Aorta (tissue), 5 donors: ENCODE measurements at regions of chr15 and their contacts with region 1.

Region 1: DNA sequence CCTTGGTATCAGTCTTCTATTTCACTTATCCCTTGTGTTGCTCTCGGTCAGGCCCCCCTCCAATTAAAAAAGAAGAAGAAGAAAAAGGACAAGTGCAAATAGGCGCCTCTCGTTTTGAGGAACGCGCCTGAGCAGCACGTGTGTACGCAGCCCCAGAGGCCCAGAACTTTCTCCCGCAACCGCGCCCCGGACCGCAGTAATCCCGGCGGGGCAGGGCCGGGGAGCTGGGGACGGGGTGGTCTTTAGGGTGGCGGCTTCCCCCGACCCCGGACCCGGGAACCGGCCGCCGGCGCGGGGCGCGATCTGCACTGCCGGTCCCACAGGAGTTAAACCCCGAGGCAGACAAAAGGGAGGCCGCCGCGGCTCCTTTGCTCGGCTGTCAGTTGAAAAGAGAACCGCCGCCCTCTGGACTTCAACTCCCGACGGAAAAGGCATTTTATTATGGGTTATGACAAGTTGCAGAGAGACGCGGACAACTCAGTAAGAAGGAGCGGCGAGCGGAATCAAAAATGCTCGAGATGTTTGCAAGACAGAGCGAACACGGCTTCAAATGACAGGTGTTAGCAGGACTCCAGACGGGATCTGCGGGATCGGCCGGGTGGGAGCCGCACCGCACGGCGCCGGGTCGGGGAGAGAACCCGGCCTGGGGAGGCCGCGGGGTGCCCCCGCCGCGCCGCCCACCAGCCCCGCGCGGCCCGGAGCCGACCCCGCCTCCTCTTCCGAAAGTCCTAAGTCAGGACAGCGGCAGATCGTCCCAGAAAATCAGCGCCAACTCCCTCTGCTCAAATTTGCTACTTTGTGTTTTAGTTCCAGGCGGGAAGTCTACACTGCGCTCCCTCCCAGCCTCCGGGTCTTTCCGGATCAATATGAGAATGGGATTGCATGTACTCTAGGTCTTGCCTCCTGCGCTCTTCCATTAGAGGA is 79.0 kb downstream of the NR2F2 start:
- DNase-seq: no peak
- ATAC-seq: no peak
- H3K4me3 ChIP-seq: peak overlapping the region; percentile 5 to 22
- H3K27ac ChIP-seq: no peak overlapping the region
- H3K4me1 ChIP-seq: no peaks in the 10 kb centered on the region
- H3K27me3 ChIP-seq: peaks cover 0 to 5% of the 10 kb centered on the region in 2 donors

Region 2: GRCh38 chr15:95659656-95660055 is 749.8 kb before region 1 on chr15:
- intact Hi-C with region 1: no loop called
- DNase-seq: no peak
- ATAC-seq: no peak
- H3K4me3 ChIP-seq: no peak overlapping the region
- H3K27ac ChIP-seq: no peak overlapping the region
- H3K4me1 ChIP-seq: peaks cover 0 to 2% of the 10 kb centered on the region in 2 donors
- H3K27me3 ChIP-seq: no peaks in the 10 kb centered on the region

Region 3: DNA sequence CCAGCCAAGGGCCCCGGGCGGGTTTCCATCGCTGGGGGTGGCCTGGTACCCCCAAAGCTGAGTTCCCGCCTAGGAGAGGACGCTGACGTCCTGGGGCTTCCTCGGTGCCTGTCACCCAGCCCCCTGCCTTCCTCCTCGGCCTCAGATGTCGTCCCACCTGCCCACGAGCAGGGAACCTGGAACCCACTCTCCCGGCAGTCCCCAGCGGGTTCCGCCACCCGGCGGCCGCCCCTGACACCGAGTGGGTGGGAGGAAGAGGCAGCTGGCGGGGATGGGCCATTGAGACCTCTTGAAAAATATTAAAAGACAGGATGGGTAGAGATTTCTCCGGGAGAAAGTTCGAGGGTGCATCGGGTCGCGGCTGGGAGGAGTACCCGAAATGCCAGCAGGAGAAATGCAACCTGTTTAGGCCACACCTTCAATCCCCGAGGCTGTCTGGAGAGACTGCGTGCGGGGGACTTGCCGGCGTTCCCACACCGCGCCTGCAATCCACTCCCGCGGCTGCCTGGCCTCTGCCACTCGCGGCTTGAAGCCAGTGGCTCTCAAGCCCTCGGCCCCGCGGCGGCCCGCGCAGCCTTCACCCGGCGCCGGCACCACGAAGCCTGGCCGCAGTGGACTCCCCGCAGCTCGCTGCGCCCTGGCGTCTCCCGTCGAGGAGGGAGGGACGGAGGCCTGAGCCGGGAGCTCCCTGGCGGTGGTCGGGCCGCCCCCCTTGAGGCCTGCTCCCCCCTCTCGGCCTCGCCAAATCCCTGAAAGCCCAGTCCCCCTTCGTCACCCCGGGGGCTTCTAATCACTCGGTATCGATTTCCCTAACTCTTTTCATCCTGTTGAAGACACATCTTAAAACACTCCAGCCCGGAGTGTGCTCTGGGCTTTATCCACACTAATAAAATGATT is 87.6 kb before region 1 on chr15:
- intact Hi-C with region 1: no loop called
- DNase-seq: peak in 1 of 2 donors; percentile 86
- ATAC-seq: peak; percentile 64
- H3K4me3 ChIP-seq: peak overlapping the region; percentile 27 to 70
- H3K27ac ChIP-seq: peak overlapping the region in 1 of 2 donors; percentile 66
- H3K4me1 ChIP-seq: no peaks in the 10 kb centered on the region
- H3K27me3 ChIP-seq: no peaks in the 10 kb centered on the region

Region 4: DNA sequence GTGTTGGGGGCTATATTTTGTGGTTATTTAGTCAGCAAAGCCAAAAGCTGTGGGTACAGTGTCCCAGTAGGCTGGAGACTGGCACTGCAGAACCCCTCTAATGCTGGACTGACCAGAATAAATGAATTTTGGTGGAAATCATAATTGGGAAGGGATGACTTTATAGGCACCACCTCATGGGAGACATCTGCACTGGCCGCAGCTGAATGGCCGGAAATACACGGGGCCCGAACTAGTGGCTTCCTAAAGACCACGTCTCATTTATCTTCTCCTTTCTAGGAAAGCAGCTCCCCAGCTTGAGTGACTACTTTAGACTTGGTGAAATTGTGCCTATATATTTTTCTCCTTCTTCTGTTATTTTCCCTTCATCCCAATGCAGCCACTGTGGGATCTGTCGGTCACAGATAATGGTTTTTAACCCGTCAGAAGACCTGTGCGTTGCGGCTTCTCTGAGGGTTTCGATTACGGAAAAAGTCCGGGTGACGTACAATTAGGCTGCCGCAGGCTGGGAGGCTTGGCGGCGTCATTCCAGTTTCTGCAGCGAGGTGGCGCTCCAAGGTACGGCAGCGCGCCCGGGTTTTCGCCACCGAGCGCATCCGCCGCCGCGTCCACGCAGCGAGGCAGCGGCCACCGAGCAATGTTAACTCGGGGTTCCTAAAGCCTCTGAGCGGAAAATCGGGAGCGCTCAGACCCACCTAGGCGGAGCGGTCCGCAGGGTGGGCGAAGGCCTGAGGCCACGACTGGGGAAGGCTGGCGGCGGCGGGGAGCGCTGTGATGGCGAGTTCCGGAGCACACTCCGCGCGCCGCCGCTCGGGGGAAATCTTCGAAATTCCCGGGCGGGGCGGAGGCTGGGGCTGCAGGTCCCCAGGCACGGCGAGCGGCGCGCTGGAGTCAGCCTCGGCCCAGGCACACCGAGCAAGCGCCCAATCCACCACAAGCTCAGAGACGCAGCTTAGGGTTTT is 52.7 kb before region 1 on chr15:
- intact Hi-C with region 1: loop called in 1 of 2 experiments (anchors 5 kb)
- DNase-seq: peak; percentile 81 to 96
- ATAC-seq: peak; percentile 80
- H3K4me3 ChIP-seq: peak overlapping the region; percentile 62 to 66
- H3K27ac ChIP-seq: no peak overlapping the region
- H3K4me1 ChIP-seq: no peaks in the 10 kb centered on the region
- H3K27me3 ChIP-seq: no peaks in the 10 kb centered on the region

Region 5: GRCh38 chr15:96381463-96381862 is 28.0 kb before region 1 on chr15:
- intact Hi-C with region 1: no loop called
- DNase-seq: no peak
- ATAC-seq: no peak
- H3K4me3 ChIP-seq: no peak overlapping the region
- H3K27ac ChIP-seq: no peak overlapping the region
- H3K4me1 ChIP-seq: peaks cover 0 to 3% of the 10 kb centered on the region in 2 donors
- H3K27me3 ChIP-seq: no peaks in the 10 kb centered on the region